Endothelial cell of umbilical vein (primary cell): ENCODE measurements at regions of chr4 and their contacts with region 1.

Region 1: GRCh38 chr4:52861879-52862616 is at the start of gene RASL11B:
- DNase-seq: peak; percentile 78
- H3K4me3 ChIP-seq: peak within 1 kb of the TSS; percentile 5 to 50 (median 38)
- H3K27ac ChIP-seq: no peak within 1 kb of the TSS
- H3K4me1 ChIP-seq: peaks cover 9% of the 10 kb centered on the region
- H3K27me3 ChIP-seq: peaks cover 32 to 55% of the 10 kb centered on the region in 2 experiments
- CTCF ChIP-seq: no peak
- POLR2A ChIP-seq: no peak
- total RNA-seq, gene RASL11B: not detected in 2 replicates

Region 2: GRCh38 chr4:52712172-52712990 is 149.7 kb before region 1 on chr4:
- CTCF ChIA-PET with region 1: no interaction called
- POLR2A ChIA-PET with region 1: no interaction called
- dilution Hi-C with region 1: no loop called
- intact Hi-C with region 1: loop called (anchors 2 kb)
- DNase-seq: peak; percentile 97
- H3K4me3 ChIP-seq: peak overlapping the region; percentile 61 to 86 (median 76)
- H3K27ac ChIP-seq: peak overlapping the region; percentile 73
- H3K4me1 ChIP-seq: peaks cover 30% of the 10 kb centered on the region
- H3K27me3 ChIP-seq: peaks cover 0 to 5% of the 10 kb centered on the region in 2 experiments
- CTCF ChIP-seq: no peak
- POLR2A ChIP-seq: peak; percentile 97

Region 3: DNA sequence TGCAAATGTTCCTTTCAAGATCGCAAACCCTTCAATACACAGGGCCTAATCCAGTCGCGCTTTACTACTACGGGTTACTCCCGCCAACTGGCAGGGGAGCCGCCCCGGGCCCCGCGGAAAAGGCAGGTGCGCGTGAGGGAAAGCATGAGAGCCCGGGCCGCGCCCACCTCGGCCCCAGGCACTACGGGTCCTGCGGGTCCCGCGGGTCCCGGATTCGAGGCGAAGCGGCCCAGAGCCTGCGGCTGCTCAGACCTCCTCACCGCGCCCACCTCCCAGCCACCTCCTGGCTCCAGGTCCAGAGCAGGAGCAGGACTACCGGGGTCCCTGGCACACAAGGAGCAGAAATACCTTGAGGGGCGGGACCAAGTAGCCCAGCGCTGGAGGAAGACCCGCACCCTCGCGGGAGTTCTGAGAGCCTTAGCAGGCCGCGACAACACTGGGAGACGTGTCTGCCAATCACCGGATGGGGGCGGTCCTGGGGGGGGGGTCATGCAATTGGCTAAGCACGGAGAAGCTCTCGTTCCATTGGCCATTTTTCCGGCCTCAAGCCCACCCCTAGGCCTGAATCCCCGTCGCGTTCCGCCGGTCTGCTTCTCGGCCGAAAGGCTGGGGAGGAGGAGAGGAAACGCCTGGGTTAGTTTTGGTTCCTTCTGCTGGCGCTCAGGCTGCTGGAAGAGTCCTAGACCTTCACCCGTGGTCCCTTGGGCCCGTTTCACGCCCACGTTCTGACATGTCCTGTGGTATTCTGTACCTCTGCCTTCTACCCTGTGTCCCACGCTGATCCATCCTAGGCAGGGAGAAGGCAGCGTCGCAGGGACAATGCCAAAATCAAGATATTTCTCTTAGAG is 139.9 kb before region 1 on chr4:
- CTCF ChIA-PET with region 1: no interaction called
- POLR2A ChIA-PET with region 1: no interaction called
- dilution Hi-C with region 1: no loop called
- intact Hi-C with region 1: loop called (anchors 2 kb)
- DNase-seq: peak; percentile 98
- H3K4me3 ChIP-seq: peak overlapping the region; percentile 34 to 69 (median 65)
- H3K27ac ChIP-seq: peak overlapping the region; percentile 44
- H3K4me1 ChIP-seq: peaks cover 4% of the 10 kb centered on the region
- H3K27me3 ChIP-seq: no peaks in the 10 kb centered on the region
- CTCF ChIP-seq: no peak
- POLR2A ChIP-seq: peak; percentile 98

Region 4: GRCh38 chr4:52911684-52912294 is 49.7 kb after region 1 on chr4:
- CTCF ChIA-PET with region 1: interaction called, 5 read pairs
- POLR2A ChIA-PET with region 1: no interaction called
- dilution Hi-C with region 1: no loop called
- intact Hi-C with region 1: loop called (anchors 5 kb)
- DNase-seq: peak; percentile 76
- H3K4me3 ChIP-seq: no peak overlapping the region
- H3K27ac ChIP-seq: no peak overlapping the region
- H3K4me1 ChIP-seq: no peaks in the 10 kb centered on the region
- H3K27me3 ChIP-seq: no peaks in the 10 kb centered on the region
- CTCF ChIP-seq: peak; percentile 85 to 89
- POLR2A ChIP-seq: no peak

Region 5: GRCh38 chr4:53161787-53162433 is 299.9 kb after region 1 on chr4:
- CTCF ChIA-PET with region 1: no interaction called
- POLR2A ChIA-PET with region 1: no interaction called
- dilution Hi-C with region 1: no loop called
- intact Hi-C with region 1: no loop called
- DNase-seq: no peak
- H3K4me3 ChIP-seq: no peak overlapping the region
- H3K27ac ChIP-seq: no peak overlapping the region
- H3K4me1 ChIP-seq: no peaks in the 10 kb centered on the region
- H3K27me3 ChIP-seq: no peaks in the 10 kb centered on the region
- CTCF ChIP-seq: no peak
- POLR2A ChIP-seq: no peak